ENCODE measurements at regions of chr19 and their contacts with region 1.

Region 1: DNA sequence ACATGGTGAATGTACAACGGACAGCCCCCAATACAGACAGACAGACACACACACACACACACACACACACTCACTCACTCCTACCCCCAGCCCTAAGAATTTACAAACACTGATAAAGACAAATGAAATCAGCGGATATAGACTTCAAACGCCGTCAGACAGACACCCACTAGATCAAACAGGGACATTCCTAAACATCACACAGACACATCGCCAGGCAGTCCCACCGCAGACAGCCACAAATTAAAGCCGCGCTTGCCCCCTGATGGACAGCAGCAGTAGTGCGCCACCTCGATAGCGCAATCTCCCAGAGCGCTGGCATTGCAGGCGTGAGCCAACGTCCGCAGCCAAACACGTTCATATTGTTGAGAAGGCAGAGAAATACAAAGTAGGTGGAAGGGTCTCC is 24.7 kb upstream of the ADGRE1 start:
- DNase-seq: peak; percentile 79 to 86
- H3K4me3 ChIP-seq: peak overlapping the region in 1 of 2 donors; percentile 32
- H3K27ac ChIP-seq: no peak overlapping the region
- H3K4me1 ChIP-seq: no peaks in the 10 kb centered on the region
- H3K27me3 ChIP-seq: peaks cover 0 to 14% of the 10 kb centered on the region in 2 donors
- CTCF ChIP-seq: peak; percentile 75 to 77

Region 2: DNA sequence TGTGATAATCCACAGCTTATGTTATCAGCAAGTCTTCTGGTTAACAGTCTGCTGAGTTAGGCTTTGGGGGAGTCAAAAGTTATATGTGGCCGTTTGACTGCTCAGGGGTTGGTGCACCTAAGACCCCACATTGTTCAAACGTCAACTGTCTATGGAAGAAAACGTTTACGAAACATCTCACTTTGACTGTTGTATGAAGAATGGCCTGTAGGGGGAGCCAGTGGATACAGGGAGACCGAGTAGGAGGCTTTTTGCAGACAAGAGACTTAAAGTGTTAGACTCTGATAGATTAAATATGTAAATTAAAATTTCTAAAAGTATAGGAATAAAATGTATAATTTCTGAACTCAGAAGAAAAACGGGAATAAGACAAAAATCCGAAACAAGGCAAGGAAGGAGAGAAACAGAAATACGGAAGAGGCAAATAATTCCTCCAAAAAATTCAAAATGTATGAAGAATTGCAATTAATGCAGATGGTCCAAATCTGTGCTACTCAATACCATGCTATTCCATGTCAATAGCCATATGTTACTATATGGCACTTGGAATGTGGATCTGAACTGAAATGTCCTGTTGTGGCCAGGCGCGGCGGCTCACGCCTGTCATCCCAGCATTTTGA is 230.6 kb before region 1 on chr19:
- intact Hi-C with region 1: loop called (anchors 5 kb)
- DNase-seq: peak in 1 of 2 donors; percentile 76
- H3K4me3 ChIP-seq: no peak overlapping the region
- H3K27ac ChIP-seq: no peak overlapping the region
- H3K4me1 ChIP-seq: no peaks in the 10 kb centered on the region
- H3K27me3 ChIP-seq: peaks cover 0 to 11% of the 10 kb centered on the region in 2 donors
- CTCF ChIP-seq: peak; percentile 74 to 79

Region 3: GRCh38 chr19:6737284-6738046 is 125.2 kb before region 1 on chr19 and contains the start of gene GPR108:
- intact Hi-C with region 1: loop called (anchors 10 kb)
- DNase-seq: peak; percentile 100
- H3K4me3 ChIP-seq: peak within 1 kb of the TSS; percentile 78 to 95
- H3K27ac ChIP-seq: peak within 1 kb of the TSS; percentile 93 to 97
- H3K4me1 ChIP-seq: peaks cover 0 to 46% (median 37%) of the 10 kb centered on the region in 4 donors
- H3K27me3 ChIP-seq: no peaks in the 10 kb centered on the region
- CTCF ChIP-seq: no peak

Region 4: DNA sequence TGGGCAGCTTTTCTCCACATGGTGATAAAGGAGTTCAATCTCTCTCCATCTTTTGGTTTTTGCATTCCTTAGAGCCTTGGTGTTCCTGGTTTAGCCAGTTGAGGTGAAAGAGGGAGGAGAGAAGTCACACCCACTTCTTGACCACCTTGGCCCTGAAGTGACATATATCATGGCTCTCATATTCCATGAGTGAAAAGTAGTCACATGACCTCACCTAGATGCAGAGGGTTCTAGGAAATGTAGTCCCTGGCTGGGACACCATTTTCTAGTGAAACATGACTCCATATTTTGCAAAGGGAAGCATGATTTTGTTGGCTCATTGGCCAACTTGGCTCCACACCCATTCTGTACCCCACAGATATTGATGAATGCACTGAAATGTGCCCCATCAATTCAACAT is 40.8 kb after region 1 on chr19:
- intact Hi-C with region 1: no loop called
- DNase-seq: no peak
- H3K4me3 ChIP-seq: no peak overlapping the region
- H3K27ac ChIP-seq: no peak overlapping the region
- H3K4me1 ChIP-seq: no peaks in the 10 kb centered on the region
- H3K27me3 ChIP-seq: no peaks in the 10 kb centered on the region
- CTCF ChIP-seq: no peak